ENCODE measurements at regions of chr21 and their contacts with region 1.

Region 1: GRCh38 chr21:41777951-41778874 is 11.4 kb upstream of the RIPK4 start:
- DNase-seq: peak; percentile 85 to 94 (median 89)
- ATAC-seq: peak; percentile 84 to 93 (median 90)
- H3K4me3 ChIP-seq: no peak overlapping the region
- H3K27ac ChIP-seq: peak overlapping the region in 3 of 4 donors; percentile 44 to 80 (median 55)
- H3K4me1 ChIP-seq: peaks cover 4 to 20% (median 13%) of the 10 kb centered on the region in 3 donors
- H3K27me3 ChIP-seq: no peaks in the 10 kb centered on the region
- CTCF ChIP-seq: peak; percentile 76 to 99 (median 91)

Region 2: GRCh38 chr21:41277846-41278245 is 500.4 kb before region 1 on chr21:
- intact Hi-C with region 1: no loop called
- DNase-seq: no peak
- ATAC-seq: no peak
- H3K4me3 ChIP-seq: no peak overlapping the region
- H3K27ac ChIP-seq: no peak overlapping the region
- H3K4me1 ChIP-seq: peaks cover 0 to 5% (median 0%) of the 10 kb centered on the region in 3 donors
- H3K27me3 ChIP-seq: no peaks in the 10 kb centered on the region
- CTCF ChIP-seq: no peak

Region 3: GRCh38 chr21:41671859-41672532 is 106.2 kb before region 1 on chr21:
- intact Hi-C with region 1: loop called in 1 of 3 experiments (anchors 5 kb)
- DNase-seq: peak in 1 of 6 donors; percentile 49
- ATAC-seq: no peak
- H3K4me3 ChIP-seq: no peak overlapping the region
- H3K27ac ChIP-seq: no peak overlapping the region
- H3K4me1 ChIP-seq: peaks cover 0 to 16% (median 11%) of the 10 kb centered on the region in 3 donors
- H3K27me3 ChIP-seq: no peaks in the 10 kb centered on the region
- CTCF ChIP-seq: no peak

Measured in pancreas (tissue), 10 donors.